H1 (cell line): ENCODE measurements at regions of chr5 and their contacts with region 1.

Region 1: DNA sequence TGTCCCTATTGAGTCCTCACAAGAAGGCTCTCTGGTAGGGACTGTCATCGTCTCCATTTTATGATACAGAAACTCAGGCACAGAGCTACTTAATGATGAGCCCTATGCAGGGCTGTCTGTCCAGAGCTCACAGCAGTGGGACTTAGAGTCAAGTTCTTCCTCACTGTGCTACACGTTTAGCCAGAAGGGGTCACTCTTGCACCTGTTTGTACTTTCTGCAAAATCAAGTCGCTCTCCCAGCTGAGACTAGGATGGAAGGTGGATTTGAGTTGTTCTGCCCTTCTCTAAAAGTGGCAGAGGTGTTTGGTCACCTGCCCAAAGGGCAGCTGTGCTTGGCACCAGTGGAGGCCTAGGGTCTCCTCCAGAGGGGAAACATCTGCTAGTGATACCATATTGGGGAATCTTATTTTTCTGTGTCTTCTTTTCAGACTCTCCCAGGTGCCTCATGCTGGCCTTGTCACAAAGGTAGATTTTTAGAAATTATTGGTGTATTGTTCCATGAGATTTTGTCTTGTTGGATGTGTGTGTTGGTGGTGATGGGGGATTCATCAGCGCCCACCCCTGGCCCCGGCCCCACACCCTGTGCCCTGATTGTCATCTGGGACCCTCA is 104.2 kb downstream of the PPARGC1B start:
- DNase-seq: peak; percentile 25 to 58
- H3K4me3 ChIP-seq: no peak overlapping the region
- H3K27ac ChIP-seq: no peak overlapping the region
- H3K4me1 ChIP-seq: no peaks in the 10 kb centered on the region
- H3K27me3 ChIP-seq: no peaks in the 10 kb centered on the region
- CTCF ChIP-seq: peak; percentile 35 to 91 (median 73)
- EP300 ChIP-seq: no peak
- POLR2A ChIP-seq: no peak
- RAD21 ChIP-seq: peak; percentile 79

Region 2: DNA sequence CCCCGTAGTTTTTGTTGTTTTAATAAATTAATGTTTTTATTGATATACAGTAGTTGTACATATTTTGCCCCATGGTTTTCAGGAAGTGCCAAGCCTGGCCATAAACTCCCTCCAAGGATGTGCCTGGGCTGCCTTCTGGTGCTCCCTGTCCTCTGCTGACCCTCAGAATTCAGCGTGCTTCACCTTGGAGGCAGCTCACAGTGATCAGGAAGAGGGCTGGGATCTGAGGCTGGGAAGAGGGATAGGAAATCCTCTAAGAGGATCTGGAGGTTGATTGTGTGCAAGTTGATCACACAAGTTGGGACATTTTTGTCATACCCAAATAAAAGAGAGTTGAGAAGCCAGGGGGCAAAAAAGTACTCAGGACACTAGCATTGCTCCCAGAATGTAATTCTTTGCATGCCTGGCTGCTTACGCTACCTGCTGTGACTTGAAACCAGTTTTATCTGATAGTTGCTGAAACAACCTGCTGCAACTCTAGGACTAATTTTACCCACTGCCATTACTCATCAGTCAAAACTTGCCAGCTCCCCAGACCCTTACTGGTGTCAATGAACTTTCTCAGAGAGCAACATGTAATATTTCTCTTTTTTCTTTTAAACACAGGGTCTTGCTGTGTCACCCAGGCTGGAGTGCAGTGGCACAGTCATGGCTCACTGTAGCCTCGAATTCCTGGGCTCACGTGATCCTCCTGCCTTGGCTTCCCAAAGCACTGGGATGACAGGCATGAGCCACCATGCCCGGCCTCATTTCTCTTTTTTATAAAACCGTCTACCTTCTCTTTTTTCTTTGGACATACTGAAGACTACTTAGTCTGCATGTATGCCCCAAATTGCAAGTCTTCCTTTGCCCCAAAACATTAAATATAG is 81.3 kb after region 1 on chr5:
- CTCF ChIA-PET with region 1: interaction called, 10 read pairs
- POLR2A ChIA-PET with region 1: no interaction called
- DNase-seq: no peak
- H3K4me3 ChIP-seq: no peak overlapping the region
- H3K27ac ChIP-seq: no peak overlapping the region
- H3K4me1 ChIP-seq: peaks cover 0 to 3% (median 0%) of the 10 kb centered on the region in 4 experiments; a peak in 1 of 7 replicates
- H3K27me3 ChIP-seq: no peaks in the 10 kb centered on the region
- CTCF ChIP-seq: no peak
- EP300 ChIP-seq: no peak
- POLR2A ChIP-seq: no peak
- RAD21 ChIP-seq: no peak

Region 3: GRCh38 chr5:149951135-149951749 is 116.9 kb after region 1 on chr5:
- CTCF ChIA-PET with region 1: interaction called, 25 read pairs
- POLR2A ChIA-PET with region 1: no interaction called
- DNase-seq: no peak
- H3K4me3 ChIP-seq: no peak overlapping the region
- H3K27ac ChIP-seq: no peak overlapping the region
- H3K4me1 ChIP-seq: no peaks in the 10 kb centered on the region
- H3K27me3 ChIP-seq: no peaks in the 10 kb centered on the region
- CTCF ChIP-seq: peak; percentile 27 to 56 (median 29); a peak in 3 of 4 replicates
- EP300 ChIP-seq: no peak
- POLR2A ChIP-seq: no peak
- RAD21 ChIP-seq: peak; percentile 10 to 29; a peak in 2 of 4 replicates

Region 4: GRCh38 chr5:149969181-149969930 is 135.0 kb after region 1 on chr5:
- CTCF ChIA-PET with region 1: interaction called, 112 read pairs
- POLR2A ChIA-PET with region 1: no interaction called
- DNase-seq: no peak
- H3K4me3 ChIP-seq: no peak overlapping the region
- H3K27ac ChIP-seq: no peak overlapping the region
- H3K4me1 ChIP-seq: no peaks in the 10 kb centered on the region
- H3K27me3 ChIP-seq: no peaks in the 10 kb centered on the region
- CTCF ChIP-seq: no peak
- EP300 ChIP-seq: no peak
- POLR2A ChIP-seq: no peak
- RAD21 ChIP-seq: no peak

Region 5: GRCh38 chr5:149990518-149991376 is 156.4 kb after region 1 on chr5:
- CTCF ChIA-PET with region 1: interaction called, 172 read pairs
- POLR2A ChIA-PET with region 1: no interaction called
- DNase-seq: peak in 1 of 2 experiments; percentile 65
- H3K4me3 ChIP-seq: no peak overlapping the region
- H3K27ac ChIP-seq: no peak overlapping the region
- H3K4me1 ChIP-seq: no peaks in the 10 kb centered on the region
- H3K27me3 ChIP-seq: no peaks in the 10 kb centered on the region
- CTCF ChIP-seq: peak; percentile 53 to 92 (median 89)
- EP300 ChIP-seq: no peak
- POLR2A ChIP-seq: no peak
- RAD21 ChIP-seq: peak; percentile 98